WTC11 (cell line): ENCODE measurements at regions of chr10 and their contacts with region 1.

Region 1: GRCh38 chr10:6086375-6087233 is 2.2 kb upstream of the RBM17 start:
- DNase-seq: peak; percentile 92
- ATAC-seq: peak; percentile 68
- H3K4me3 Mint-ChIP-seq: no peak overlapping the region
- H3K27ac Mint-ChIP-seq: peak overlapping the region; percentile 76; the same call in 1 of the 2 replicates
- H3K4me1 Mint-ChIP-seq: peaks cover 38% of the 10 kb centered on the region
- H3K27me3 Mint-ChIP-seq: no peaks in the 10 kb centered on the region; the same call in 1 of the 2 replicates
- CTCF ChIP-seq: peak; percentile 55

Region 2: DNA sequence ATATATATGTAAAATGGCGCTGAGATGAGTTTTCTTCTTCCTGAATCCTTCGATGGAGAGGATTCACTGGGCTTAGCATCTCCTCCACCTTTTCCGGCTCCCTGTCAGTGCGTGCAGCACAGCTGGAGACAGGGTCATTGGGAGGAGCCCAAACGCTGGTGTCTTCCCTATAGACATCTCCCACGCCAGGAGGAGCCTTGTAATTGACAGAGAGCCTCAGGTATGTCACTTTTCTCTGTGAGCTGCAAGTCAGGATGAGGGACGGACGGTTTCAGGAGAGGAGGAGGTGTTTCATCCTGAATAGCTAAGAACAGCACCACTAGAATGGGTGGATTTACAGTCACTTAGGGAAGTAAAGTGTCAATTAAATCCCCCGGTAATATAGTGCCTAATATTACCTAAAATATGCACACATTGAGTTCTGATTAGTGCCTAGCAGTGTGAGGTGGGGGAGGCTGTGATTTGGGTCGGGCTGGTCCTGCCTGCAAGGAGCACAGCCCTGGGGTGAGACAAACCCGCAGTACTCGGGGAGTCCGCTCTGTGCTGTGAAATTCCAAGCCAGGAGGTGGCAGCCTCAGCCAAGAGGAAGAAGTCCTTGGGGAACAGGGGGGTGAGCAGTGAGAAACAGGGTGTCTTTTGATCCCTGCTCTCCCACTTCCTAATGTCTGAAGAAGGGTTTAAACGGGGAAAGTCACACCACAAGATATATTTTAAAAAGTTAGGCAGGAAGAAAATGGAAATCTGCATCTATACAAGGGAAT is 137.4 kb before region 1 on chr10:
- CTCF ChIA-PET with region 1: interaction called, 16 read pairs
- POLR2A ChIA-PET with region 1: no interaction called
- DNase-seq: peak; percentile 80
- ATAC-seq: peak; percentile 88
- H3K4me3 Mint-ChIP-seq: no peak overlapping the region
- H3K27ac Mint-ChIP-seq: no peak overlapping the region
- H3K4me1 Mint-ChIP-seq: peaks cover 35% of the 10 kb centered on the region
- H3K27me3 Mint-ChIP-seq: no peaks in the 10 kb centered on the region
- CTCF ChIP-seq: peak; percentile 32; the same call in 1 of the 2 replicates

Region 3: DNA sequence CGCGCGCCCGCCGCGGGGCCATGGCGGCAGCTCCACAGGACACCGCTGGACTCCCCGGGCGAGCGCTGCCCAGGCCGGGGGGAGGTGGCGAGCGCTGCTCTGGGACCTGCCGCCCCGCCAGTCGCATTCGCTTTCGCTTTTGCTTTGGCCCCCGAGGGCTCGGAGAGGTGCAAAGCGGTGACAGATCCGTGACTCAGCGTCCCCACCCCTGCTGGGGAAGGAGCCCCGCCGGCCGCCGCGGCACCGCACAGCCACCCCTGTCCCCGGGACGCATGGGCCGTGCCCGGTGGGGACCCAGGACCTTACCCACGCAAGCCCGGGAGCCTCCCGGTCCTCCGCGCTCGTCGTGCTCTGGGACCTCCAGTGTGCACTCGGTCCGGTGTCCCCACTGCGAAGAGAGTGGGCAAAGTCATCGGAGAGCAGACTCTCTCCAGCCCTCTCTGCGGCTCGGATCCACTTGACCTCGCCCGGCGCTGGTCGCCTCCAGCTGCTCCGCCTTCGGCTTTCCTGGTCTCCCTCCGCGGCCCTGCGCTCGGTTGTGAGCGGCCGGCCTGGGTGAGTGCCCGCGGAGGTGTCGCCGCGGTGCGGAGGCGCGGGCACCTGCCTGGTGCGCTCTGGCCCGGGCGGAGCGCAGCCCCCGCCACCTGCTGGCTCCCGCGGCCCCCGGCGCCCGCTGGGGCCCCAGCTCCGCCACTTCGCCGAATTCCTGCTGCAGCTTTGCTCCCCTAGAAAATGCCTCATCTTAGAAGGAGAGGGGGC is 109.0 kb before region 1 on chr10 and contains the start of gene IL15RA:
- CTCF ChIA-PET with region 1: interaction called, 12 read pairs
- POLR2A ChIA-PET with region 1: no interaction called
- DNase-seq: peak; percentile 71
- ATAC-seq: peak; percentile 77
- H3K4me3 Mint-ChIP-seq: peak within 1 kb of the TSS; percentile 80
- H3K27ac Mint-ChIP-seq: no peak within 1 kb of the TSS
- H3K4me1 Mint-ChIP-seq: peaks cover 18% of the 10 kb centered on the region
- H3K27me3 Mint-ChIP-seq: peaks cover 55% of the 10 kb centered on the region
- CTCF ChIP-seq: no peak
- total RNA-seq, gene IL15RA: 1.9 to 2.2 TPM (median 2.0 TPM) in 3 replicates

Region 4: DNA sequence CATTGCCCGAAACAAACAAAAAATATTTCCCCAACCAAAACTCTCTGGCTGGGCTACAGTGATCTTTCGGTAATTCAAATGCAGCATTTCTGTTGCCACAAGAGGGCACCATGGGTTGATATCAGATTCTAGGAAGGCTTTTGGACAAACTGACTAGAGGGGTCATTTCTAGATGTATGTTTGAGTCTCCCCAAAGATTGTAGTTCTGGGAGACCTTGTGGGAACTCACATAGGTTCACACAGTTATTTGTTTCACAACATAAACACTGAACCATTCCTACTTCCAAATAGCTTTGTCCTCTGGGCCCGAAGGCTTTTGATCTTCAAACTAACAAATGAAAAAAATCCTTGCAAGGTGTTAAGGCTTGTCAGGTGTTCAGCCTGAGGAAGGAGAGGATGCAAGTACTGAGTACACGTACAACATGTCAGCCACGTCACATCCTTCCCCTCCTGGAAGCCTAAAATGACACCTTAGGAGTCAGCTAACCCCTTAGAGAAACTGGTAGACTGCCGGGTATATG is 72.3 kb before region 1 on chr10:
- CTCF ChIA-PET with region 1: interaction called, 16 read pairs
- POLR2A ChIA-PET with region 1: no interaction called
- DNase-seq: peak; percentile 55
- ATAC-seq: peak; percentile 85
- H3K4me3 Mint-ChIP-seq: no peak overlapping the region
- H3K27ac Mint-ChIP-seq: no peak overlapping the region
- H3K4me1 Mint-ChIP-seq: peaks cover 7% of the 10 kb centered on the region
- H3K27me3 Mint-ChIP-seq: no peaks in the 10 kb centered on the region
- CTCF ChIP-seq: peak; percentile 35; the same call in 1 of the 2 replicates

Region 5: DNA sequence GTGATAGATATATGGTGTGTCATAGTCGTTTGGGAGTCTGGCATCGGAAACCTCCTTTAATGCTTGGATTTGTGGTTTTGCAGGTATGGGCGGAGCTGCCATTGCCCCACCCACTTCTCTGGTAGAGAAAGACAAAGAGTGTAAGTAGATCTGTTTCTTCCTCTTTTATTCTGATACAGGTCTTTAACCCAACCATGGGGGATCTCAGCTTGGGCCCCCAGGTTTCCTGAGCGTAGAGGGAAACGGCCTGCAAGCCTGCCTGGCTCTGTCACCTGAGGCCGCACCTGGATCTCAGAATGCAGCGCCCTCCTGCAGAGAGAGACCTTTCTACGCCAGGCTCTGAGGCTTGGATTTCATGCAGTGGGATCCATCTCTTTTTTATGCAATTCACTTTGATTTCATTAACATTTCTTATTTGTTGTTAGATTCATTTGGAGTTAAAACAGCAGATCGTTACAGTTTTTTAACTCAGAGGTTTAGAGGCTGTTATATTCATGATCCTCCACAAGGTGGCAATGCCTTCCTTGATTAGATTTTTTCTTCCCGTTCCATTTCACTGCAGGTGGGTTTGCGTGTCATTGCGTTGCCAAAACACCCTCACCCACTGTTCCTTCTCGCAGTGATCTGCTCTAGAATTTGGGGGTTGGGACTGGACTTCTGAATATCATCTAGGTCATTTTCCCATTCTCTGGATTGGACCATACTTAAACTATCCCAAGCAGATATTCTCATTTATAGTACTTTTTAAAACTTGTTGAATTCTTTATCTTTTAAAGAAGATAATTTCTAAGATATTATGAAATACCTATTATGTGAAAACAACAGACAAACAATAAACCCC is 22.2 kb after region 1 on chr10:
- CTCF ChIA-PET with region 1: interaction called, 18 read pairs
- POLR2A ChIA-PET with region 1: no interaction called
- DNase-seq: peak; percentile 84
- ATAC-seq: peak; percentile 97
- H3K4me3 Mint-ChIP-seq: peak overlapping the region; percentile 43
- H3K27ac Mint-ChIP-seq: peak overlapping the region; percentile 97
- H3K4me1 Mint-ChIP-seq: peaks cover 43% of the 10 kb centered on the region
- H3K27me3 Mint-ChIP-seq: no peaks in the 10 kb centered on the region
- CTCF ChIP-seq: peak; percentile 70

Region 6: DNA sequence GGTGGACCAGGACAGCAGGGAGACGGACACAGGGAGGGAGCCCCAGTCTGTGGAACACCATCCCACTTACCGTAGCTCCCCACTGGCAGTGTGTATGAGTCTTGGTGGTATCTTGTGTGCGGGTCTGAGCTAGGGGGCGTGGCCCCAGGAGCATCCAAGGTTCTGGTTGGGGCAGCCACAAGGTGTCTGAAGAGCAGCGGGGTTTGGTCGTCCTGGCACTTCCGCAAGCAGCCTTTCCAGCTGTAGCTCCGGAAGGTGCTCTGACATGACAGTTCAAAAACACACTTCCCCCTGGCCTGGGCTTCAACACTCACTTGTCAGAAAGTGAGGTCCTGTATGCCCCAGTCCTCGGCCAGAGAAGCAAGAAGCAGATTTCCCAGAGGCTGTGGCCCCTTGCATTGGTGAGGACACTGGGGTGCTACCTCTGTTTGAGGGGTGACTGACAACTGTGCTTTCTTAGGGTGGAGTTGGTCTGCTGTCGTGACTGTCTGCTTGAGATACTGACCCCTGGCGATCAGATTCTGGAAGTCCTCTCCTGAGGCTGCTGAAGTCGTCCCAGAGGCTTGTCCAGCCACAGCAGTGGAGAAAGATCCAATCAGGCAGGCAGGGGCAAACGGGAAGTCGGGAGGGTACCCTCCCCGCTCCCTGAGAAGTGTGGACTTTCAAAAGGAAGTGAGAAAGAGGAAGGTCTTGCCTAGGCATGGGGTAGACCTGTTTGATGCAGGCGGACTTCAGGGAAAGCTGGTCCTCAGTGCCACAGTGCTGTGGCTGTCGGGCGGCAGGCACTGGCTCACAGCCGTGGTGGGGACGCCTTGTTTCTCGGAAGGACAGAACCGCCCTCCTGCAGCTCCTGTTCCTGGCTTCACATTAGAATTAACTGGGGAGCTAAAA is 64.7 kb after region 1 on chr10:
- CTCF ChIA-PET with region 1: interaction called, 19 read pairs
- POLR2A ChIA-PET with region 1: interaction called, 3 read pairs
- DNase-seq: peak; percentile 75
- ATAC-seq: peak; percentile 95
- H3K4me3 Mint-ChIP-seq: no peak overlapping the region
- H3K27ac Mint-ChIP-seq: 0 out of 2 replicates have a peak overlapping the region, but pooled peaks have one; percentile 81
- H3K4me1 Mint-ChIP-seq: peaks cover 33% of the 10 kb centered on the region
- H3K27me3 Mint-ChIP-seq: no peaks in the 10 kb centered on the region
- CTCF ChIP-seq: peak; percentile 31; the same call in 1 of the 2 replicates

Region 7: DNA sequence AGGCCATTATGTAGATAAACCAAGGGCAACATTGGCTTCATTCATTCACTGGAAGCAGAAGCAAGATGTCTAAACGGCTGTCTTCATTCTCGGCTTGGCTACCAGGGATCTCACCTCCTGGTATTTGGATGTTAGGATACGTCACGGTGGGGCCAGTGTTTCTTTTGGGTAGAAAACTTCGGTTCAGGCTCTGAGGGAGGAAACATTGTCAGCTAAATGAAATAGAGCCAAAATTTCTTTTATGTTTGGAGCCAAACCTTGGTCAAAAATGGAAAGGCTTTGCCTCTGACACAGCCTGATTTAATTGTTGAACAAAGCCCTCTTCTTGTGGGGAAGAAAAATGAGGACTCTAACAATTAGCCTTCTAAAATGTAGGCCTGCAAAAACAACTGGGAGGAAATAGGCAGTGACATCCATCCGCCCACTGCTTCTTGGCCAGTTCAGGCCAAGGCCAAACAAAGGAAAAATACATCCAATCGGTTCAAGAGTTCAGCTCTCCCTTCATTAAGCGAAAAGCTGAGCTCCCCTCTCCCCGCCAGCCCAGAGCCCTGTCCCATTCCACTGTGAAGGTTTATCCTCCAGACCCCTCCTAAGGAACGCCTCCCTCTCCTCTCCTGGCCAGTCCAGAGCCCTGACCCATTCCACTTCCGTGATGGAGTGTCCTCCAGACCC is 160.6 kb after region 1 on chr10:
- CTCF ChIA-PET with region 1: no interaction called
- POLR2A ChIA-PET with region 1: no interaction called
- DNase-seq: no peak
- ATAC-seq: no peak
- H3K4me3 Mint-ChIP-seq: no peak overlapping the region
- H3K27ac Mint-ChIP-seq: no peak overlapping the region
- H3K4me1 Mint-ChIP-seq: no peaks in the 10 kb centered on the region
- H3K27me3 Mint-ChIP-seq: no peaks in the 10 kb centered on the region
- CTCF ChIP-seq: no peak